Ovary (tissue), 10 donors: ENCODE measurements at regions of chr14 and their contacts with region 1.

Region 1: GRCh38 chr14:75643985-75644384 is 16.7 kb downstream of the ERG28 start:
- DNase-seq: no peak
- H3K4me3 ChIP-seq: no peak overlapping the region
- H3K27ac ChIP-seq: no peak overlapping the region
- H3K4me1 ChIP-seq: peaks cover 8% of the 10 kb centered on the region
- H3K27me3 ChIP-seq: no peaks in the 10 kb centered on the region
- CTCF ChIP-seq: no peak
- EP300 ChIP-seq: no peak
- POLR2A ChIP-seq: no peak

Region 2: DNA sequence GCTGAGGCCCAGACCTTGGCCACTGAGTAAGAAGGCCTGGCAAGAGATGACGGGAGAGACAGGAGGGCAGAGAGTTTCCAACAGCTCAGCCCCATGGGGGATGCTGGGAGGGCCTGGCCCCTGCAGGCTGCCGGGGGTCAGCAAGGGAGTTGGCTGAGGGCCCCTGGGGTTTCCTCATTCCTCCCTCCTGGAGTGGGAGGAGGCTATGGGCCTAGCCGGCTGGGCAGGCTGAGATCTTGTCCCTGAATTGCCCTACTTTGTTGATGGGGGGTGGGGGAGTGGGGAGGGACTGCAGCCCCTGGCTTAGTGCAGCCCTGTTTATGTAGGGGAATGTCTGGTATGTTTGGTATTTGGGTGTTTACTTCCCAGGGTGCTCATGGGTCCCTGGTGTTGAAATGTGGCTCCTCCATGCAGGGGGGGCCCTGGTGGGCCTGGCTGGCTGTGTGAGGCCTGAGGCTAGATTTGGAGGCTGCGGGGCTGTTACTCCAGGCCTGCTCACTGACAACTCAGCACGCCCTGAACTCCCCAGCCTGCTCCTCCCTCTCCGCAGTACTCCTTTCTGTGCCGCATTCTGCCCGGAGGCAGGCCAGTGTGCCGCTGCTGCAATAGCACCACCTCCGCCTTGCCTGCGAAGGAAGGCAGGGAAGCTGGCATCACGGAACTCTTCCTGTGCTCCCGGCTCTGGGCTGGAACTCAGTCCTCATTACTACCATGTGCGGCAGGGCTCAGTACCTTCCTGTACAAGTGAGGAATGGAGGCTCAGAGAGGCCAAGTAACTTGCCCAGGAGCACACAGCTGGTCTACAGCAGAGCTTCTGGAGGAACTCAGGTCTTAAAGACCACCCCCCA is 190.9 kb before region 1 on chr14:
- intact Hi-C with region 1: no loop called
- DNase-seq: peak; percentile 84 to 90 (median 89)
- H3K4me3 ChIP-seq: no peak overlapping the region
- H3K27ac ChIP-seq: peak overlapping the region; percentile 63 to 71
- H3K4me1 ChIP-seq: peaks cover 48% of the 10 kb centered on the region
- H3K27me3 ChIP-seq: no peaks in the 10 kb centered on the region
- CTCF ChIP-seq: no peak
- EP300 ChIP-seq: no peak
- POLR2A ChIP-seq: no peak

Region 3: GRCh38 chr14:75591331-75591946 is 52.5 kb before region 1 on chr14:
- intact Hi-C with region 1: loop called in 1 of 4 experiments (anchors 5 kb)
- DNase-seq: no peak
- H3K4me3 ChIP-seq: no peak overlapping the region
- H3K27ac ChIP-seq: no peak overlapping the region
- H3K4me1 ChIP-seq: no peaks in the 10 kb centered on the region
- H3K27me3 ChIP-seq: no peaks in the 10 kb centered on the region
- CTCF ChIP-seq: no peak
- EP300 ChIP-seq: no peak
- POLR2A ChIP-seq: no peak

Region 4: DNA sequence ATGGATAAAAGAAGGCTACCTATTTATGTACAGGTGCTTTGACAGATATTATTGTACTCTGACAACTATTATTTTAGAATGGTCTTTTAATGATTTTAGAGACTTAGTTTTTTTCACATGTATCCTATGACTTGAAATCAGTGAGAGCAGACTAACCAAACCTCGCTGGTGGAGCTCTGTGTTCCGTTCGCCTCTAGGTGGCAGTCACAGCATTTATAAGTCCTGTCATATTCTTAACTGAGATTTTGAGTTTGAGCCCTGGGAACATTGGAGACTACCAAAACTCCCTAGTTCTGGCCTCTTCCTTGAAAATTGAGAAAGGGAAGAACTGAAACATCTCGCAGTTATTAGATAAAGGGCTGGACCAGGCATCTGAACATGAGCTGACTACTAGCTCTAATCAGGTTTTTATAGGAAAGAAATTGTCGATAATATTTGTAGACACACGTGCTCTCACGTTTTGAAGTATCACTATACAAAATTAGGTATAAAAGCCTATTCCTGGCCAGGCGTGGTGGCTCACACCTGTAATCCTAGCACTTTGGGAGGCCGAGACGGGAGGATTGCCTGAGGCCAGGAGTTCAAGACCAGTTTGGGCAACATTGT is 65.3 kb after region 1 on chr14:
- intact Hi-C with region 1: no loop called
- DNase-seq: peak; percentile 74 to 84 (median 78)
- H3K4me3 ChIP-seq: no peak overlapping the region
- H3K27ac ChIP-seq: no peak overlapping the region
- H3K4me1 ChIP-seq: no peaks in the 10 kb centered on the region
- H3K27me3 ChIP-seq: no peaks in the 10 kb centered on the region
- CTCF ChIP-seq: peak; percentile 52 to 67 (median 65)
- EP300 ChIP-seq: no peak
- POLR2A ChIP-seq: no peak

Region 5: DNA sequence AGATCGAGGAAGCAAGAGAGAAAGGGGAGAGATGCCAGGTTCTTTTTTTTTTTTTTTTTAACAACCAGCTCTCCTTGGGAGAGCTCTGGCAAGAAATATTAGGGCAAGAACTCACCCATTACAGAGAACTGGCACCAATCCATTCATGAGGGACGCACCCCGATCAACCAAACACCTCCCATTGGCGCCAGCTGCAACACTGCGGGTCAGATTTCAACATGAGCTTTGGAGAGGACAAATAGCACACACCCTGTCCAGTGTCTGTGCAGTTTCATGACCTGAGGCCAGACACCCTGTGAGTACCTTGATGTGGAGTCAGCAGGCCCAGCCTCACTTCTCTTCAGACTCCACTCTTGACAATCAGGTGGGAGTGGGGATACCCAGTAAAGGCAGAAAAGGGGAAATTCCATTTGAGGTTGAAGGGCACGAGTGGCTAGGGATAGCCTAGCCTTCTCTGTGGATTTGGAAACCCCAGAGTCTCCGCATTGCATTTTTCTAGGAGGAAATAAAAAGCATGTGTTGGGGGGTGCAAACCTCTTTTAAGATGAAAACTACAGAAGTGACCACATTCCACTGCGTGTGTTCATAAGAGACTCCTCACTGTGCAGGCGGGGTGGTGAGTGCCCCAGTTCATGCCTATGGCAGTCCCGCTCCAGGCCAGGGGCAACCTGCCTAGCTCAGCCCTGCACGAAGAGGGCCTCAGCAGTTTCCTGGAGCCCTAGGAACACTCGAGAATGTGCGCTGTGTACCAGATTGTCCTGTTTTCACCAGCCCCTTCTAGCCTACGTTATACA is 465.3 kb after region 1 on chr14:
- intact Hi-C with region 1: no loop called
- DNase-seq: no peak
- H3K4me3 ChIP-seq: no peak overlapping the region
- H3K27ac ChIP-seq: no peak overlapping the region
- H3K4me1 ChIP-seq: no peaks in the 10 kb centered on the region
- H3K27me3 ChIP-seq: no peaks in the 10 kb centered on the region
- CTCF ChIP-seq: no peak
- EP300 ChIP-seq: no peak
- POLR2A ChIP-seq: no peak